Calu3 (cell line): ENCODE measurements at regions of chr9 and their contacts with region 1.

Region 1: DNA sequence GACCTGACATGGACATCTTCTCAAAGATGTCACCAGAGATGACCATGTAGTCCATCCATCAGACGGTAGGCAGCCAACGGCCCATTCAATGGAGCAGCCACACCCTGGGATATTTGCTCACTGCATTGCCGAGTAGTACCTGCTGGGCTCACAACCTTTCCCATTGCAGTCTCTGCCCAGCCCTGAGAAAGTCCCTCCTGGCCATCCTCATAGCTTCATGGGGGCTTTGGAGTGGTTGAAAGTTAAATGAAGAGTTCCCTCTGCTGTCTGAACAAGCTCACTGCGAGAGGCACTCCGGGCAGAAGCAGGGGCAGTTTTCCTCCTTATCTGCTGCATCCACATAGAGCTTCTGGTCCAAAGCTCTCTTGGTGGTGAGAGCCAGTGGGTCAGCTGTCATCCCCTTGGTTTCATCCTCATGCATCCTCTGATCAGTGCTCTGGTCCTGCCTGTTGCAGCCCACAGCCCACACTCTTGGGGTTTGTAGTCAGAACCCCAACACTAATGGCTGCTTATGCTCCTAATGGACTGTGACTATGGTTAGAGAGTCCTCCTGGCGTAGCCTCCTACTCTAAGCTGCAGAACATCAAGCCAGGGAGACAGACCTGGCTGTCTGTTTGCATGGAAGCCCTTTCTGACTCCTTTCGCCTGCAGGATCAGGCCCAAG is 23.4 kb downstream of the TNFSF8 start:
- DNase-seq: peak; percentile 41
- H3K4me3 Mint-ChIP-seq: no peak overlapping the region
- H3K27ac Mint-ChIP-seq: no peak overlapping the region
- H3K4me1 Mint-ChIP-seq: peaks cover 40% of the 10 kb centered on the region
- H3K27me3 Mint-ChIP-seq: no peaks in the 10 kb centered on the region
- CTCF ChIP-seq: peak; percentile 44

Region 2: GRCh38 chr9:114662081-114662989 is 244.7 kb before region 1 on chr9:
- CTCF ChIA-PET with region 1: no interaction called
- intact Hi-C with region 1: loop called (anchors 5 kb)
- DNase-seq: peak; percentile 64
- H3K4me3 Mint-ChIP-seq: no peak overlapping the region
- H3K27ac Mint-ChIP-seq: no peak overlapping the region
- H3K4me1 Mint-ChIP-seq: no peaks in the 10 kb centered on the region
- H3K27me3 Mint-ChIP-seq: peaks cover 15% of the 10 kb centered on the region
- CTCF ChIP-seq: peak; percentile 75

Region 3: GRCh38 chr9:114681594-114682332 is 225.3 kb before region 1 on chr9 and contains the start of gene TEX48:
- CTCF ChIA-PET with region 1: interaction called, 7 read pairs
- intact Hi-C with region 1: loop called (anchors 1 kb)
- DNase-seq: peak; percentile 63
- H3K4me3 Mint-ChIP-seq: no peak within 1 kb of the TSS
- H3K27ac Mint-ChIP-seq: peak within 1 kb of the TSS; percentile 48
- H3K4me1 Mint-ChIP-seq: peaks cover 35% of the 10 kb centered on the region
- H3K27me3 Mint-ChIP-seq: no peaks in the 10 kb centered on the region
- CTCF ChIP-seq: peak; percentile 66
- total RNA-seq, gene TEX48: not detected in 2 replicates

Region 4: DNA sequence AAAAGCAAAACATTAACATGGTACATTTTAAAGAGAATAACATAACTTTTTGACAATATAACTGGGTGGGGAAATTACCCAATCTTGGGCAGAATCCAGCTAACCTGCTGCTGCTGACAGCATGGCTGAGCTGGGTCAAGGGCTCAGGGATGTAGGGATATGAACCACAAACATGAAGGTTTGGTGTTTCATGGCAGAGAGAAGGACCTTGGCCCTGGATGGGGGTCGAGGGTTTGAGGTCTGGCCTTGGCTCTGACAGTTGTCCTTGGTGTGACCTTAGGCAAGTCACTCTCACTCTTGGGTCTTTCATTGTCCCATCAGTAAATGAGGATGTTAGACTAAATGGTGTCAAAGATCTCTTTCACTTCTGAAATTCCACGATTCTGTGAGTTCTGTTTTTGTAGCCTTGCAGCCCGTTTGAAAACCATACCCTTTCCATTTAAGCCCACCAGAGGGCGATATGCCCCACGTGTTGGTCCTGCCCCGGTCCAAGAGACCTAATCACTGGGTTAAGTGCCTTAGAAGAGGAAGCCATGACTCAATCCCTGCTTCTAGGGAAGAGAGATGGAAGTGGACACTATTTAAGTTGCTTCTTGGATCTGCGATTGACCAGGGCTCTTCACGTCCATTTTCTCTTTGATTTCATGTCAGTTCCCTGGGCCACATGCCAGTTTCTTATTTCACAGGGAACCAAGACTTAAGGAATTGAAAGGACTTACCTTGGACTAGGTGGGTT is 168.3 kb before region 1 on chr9:
- CTCF ChIA-PET with region 1: interaction called, 11 read pairs
- intact Hi-C with region 1: loop called (anchors 1 kb)
- DNase-seq: peak; percentile 69
- H3K4me3 Mint-ChIP-seq: no peak overlapping the region
- H3K27ac Mint-ChIP-seq: no peak overlapping the region
- H3K4me1 Mint-ChIP-seq: no peaks in the 10 kb centered on the region
- H3K27me3 Mint-ChIP-seq: no peaks in the 10 kb centered on the region
- CTCF ChIP-seq: peak; percentile 60

Region 5: GRCh38 chr9:114811301-114811700 is 95.7 kb before region 1 on chr9:
- CTCF ChIA-PET with region 1: interaction called, 3 read pairs
- intact Hi-C with region 1: loop called (anchors 5 kb)
- DNase-seq: peak; percentile 57
- H3K4me3 Mint-ChIP-seq: no peak overlapping the region
- H3K27ac Mint-ChIP-seq: peak overlapping the region; percentile 34
- H3K4me1 Mint-ChIP-seq: peaks cover 29% of the 10 kb centered on the region
- H3K27me3 Mint-ChIP-seq: no peaks in the 10 kb centered on the region
- CTCF ChIP-seq: no peak

Region 6: DNA sequence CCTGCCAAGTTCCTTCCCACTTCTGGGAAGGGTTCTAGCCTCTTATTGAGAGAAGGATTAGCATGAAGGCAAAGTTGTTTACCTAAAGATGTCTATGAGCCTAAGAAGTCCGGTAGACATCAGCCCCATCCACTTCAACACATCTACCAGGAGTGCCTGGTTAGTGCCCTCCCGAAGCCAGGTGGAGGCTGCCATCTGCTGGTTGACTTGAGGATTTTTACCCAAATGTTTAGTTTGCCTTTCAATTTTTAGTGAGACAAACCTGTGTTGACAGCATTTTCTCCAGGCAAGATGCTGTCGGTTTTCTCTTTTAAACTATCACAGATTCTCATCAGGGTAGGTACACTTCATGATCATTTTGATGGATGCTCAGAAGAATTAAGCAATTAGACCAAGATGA is 107.0 kb after region 1 on chr9:
- CTCF ChIA-PET with region 1: interaction called, 3 read pairs
- intact Hi-C with region 1: loop called (anchors 2 kb)
- DNase-seq: peak; percentile 61
- H3K4me3 Mint-ChIP-seq: no peak overlapping the region
- H3K27ac Mint-ChIP-seq: no peak overlapping the region
- H3K4me1 Mint-ChIP-seq: no peaks in the 10 kb centered on the region
- H3K27me3 Mint-ChIP-seq: peaks cover 46% of the 10 kb centered on the region
- CTCF ChIP-seq: peak; percentile 50